Gastrocnemius medialis (tissue), 4 donors: ENCODE measurements at regions of chr9 and their contacts with region 1.

Region 1: GRCh38 chr9:115786321-115786720 is 367.3 kb upstream of the PAPPA start:
- DNase-seq: no peak
- ATAC-seq: no peak
- H3K4me3 ChIP-seq: no peak overlapping the region
- H3K27ac ChIP-seq: no peak overlapping the region
- H3K4me1 ChIP-seq: no peaks in the 10 kb centered on the region
- H3K27me3 ChIP-seq: no peaks in the 10 kb centered on the region
- CTCF ChIP-seq: no peak
- POLR2A ChIP-seq: no peak

Region 2: DNA sequence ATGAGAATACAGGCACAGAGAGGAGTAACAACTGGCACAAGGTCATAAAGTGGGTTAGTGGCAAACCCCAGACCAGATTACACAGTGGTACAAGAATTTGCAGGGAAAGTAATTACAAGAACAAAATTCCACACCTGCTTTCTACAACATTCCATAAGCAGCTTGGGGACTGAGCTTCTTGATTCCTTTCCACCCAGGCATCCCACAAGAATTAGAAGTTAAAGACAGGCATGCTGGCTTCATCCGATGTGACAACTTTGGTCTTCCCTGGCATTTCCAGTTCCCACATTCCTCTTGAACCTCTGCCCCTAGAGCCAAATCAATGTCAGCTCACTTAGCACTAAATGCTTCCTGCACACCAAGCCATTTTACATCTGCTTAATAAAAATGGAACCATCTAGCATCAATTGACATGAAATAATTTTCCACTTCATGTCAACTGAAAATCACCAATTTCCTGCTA is 68.6 kb before region 1 on chr9:
- in situ Hi-C with region 1: loop called in 1 of 4 experiments (anchors 10 kb)
- intact Hi-C with region 1: no loop called
- DNase-seq: no peak
- ATAC-seq: no peak
- H3K4me3 ChIP-seq: no peak overlapping the region
- H3K27ac ChIP-seq: no peak overlapping the region
- H3K4me1 ChIP-seq: no peaks in the 10 kb centered on the region
- H3K27me3 ChIP-seq: no peaks in the 10 kb centered on the region
- CTCF ChIP-seq: no peak
- POLR2A ChIP-seq: no peak

Region 3: GRCh38 chr9:115845653-115846312 is 59.5 kb after region 1 on chr9:
- in situ Hi-C with region 1: no loop called
- intact Hi-C with region 1: no loop called
- DNase-seq: no peak
- ATAC-seq: no peak
- H3K4me3 ChIP-seq: no peak overlapping the region
- H3K27ac ChIP-seq: no peak overlapping the region
- H3K4me1 ChIP-seq: no peaks in the 10 kb centered on the region
- H3K27me3 ChIP-seq: no peaks in the 10 kb centered on the region
- CTCF ChIP-seq: no peak
- POLR2A ChIP-seq: no peak